ENCODE measurements at regions of chr7 and their contacts with region 1.

Region 1: GRCh38 chr7:74026903-74027551 is 946 bp upstream of the ELN start:
- DNase-seq: peak; percentile 96
- H3K4me3 ChIP-seq: peak overlapping the region; percentile 64 to 82 (median 70)
- H3K27ac ChIP-seq: peak overlapping the region; percentile 82 to 92 (median 92)
- H3K4me1 ChIP-seq: peaks cover 58 to 100% (median 97%) of the 10 kb centered on the region in 4 donors
- H3K27me3 ChIP-seq: no peaks in the 10 kb centered on the region
- CTCF ChIP-seq: peak; percentile 96 to 97 (median 97)
- EP300 ChIP-seq: no peak
- POLR2A ChIP-seq: no peak

Region 2: DNA sequence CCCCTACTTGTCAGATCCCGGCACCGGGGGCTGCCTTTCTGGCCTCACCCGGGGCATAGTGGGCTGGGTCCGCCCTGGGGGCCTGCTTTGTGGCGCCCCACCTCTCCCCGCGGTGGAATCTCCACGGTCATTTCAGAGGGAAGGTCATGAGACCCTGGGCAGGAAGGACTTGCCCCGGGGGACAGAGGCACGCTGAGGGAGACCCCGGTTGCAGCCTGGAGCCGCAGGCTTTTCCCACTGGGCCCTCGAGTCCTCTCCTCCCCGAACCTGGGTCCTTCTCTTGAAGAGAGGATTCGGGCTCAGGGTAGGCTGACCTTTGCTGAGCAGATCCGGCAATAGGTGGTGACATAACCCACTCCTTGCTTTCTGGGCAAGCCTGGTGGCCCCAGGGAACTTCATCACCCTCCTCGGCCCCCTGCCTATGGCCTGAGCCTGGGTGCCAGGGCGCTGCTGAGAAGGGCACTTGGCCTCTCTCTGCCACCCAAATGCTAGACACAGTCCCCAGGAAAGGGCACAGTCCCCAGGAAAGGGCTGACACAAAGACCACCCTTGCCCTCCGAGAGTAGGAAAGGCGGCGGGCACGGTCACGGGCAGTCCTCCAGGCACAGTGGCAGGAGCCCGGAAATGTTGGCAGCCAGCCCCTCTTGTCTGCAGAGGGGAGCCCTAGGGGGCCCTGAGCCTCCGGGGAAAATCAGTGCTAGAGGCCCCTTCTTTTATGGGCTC is 662.9 kb before region 1 on chr7:
- intact Hi-C with region 1: no loop called
- DNase-seq: no peak
- H3K4me3 ChIP-seq: no peak overlapping the region
- H3K27ac ChIP-seq: no peak overlapping the region
- H3K4me1 ChIP-seq: no peaks in the 10 kb centered on the region
- H3K27me3 ChIP-seq: peaks cover 0 to 15% (median 0%) of the 10 kb centered on the region in 4 donors
- CTCF ChIP-seq: no peak
- EP300 ChIP-seq: no peak
- POLR2A ChIP-seq: no peak

Region 3: GRCh38 chr7:73865738-73866445 is 161.1 kb before region 1 on chr7:
- intact Hi-C with region 1: loop called (anchors 2 kb)
- DNase-seq: no peak
- H3K4me3 ChIP-seq: no peak overlapping the region
- H3K27ac ChIP-seq: no peak overlapping the region
- H3K4me1 ChIP-seq: peaks cover 17 to 30% (median 25%) of the 10 kb centered on the region in 4 donors
- H3K27me3 ChIP-seq: no peaks in the 10 kb centered on the region
- CTCF ChIP-seq: peak; percentile 64 to 79 (median 77)
- EP300 ChIP-seq: no peak
- POLR2A ChIP-seq: no peak

Region 4: GRCh38 chr7:73894733-73895551 is 132.1 kb before region 1 on chr7:
- intact Hi-C with region 1: loop called (anchors 5 kb)
- DNase-seq: peak; percentile 95
- H3K4me3 ChIP-seq: no peak overlapping the region
- H3K27ac ChIP-seq: peak overlapping the region; percentile 51 to 81 (median 71)
- H3K4me1 ChIP-seq: peaks cover 11 to 59% (median 55%) of the 10 kb centered on the region in 4 donors
- H3K27me3 ChIP-seq: no peaks in the 10 kb centered on the region
- CTCF ChIP-seq: peak in 1 of 3 experiments; percentile 4
- EP300 ChIP-seq: no peak
- POLR2A ChIP-seq: no peak

Region 5: DNA sequence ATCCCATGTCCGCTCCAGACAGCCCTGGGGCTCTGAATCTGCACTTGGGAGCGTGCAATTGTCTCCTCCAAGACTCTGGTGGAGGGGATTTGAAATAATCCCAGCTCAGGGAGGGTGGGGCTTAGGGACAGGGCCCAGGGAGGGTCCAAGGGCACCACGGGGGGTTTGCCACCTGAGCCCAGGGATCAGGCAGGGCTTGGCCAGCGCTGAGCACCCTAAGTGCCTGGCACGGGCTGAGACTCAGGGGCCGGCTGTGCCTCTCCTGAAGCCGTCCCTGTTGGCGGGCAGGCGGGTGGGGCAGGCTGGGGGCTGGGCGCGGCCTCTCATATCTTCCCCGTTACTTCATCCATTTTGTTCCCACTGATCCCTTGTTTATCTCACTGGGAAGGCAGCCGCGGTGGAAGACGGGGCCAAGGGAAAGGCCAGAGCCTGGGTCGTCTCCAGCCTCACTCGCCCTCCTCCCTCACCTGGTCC is 40.8 kb before region 1 on chr7:
- intact Hi-C with region 1: loop called (anchors 5 kb)
- DNase-seq: no peak
- H3K4me3 ChIP-seq: peak overlapping the region in 2 of 4 donors; percentile 16 to 26
- H3K27ac ChIP-seq: peak overlapping the region; percentile 76 to 86 (median 82)
- H3K4me1 ChIP-seq: peaks cover 24 to 50% (median 49%) of the 10 kb centered on the region in 4 donors
- H3K27me3 ChIP-seq: no peaks in the 10 kb centered on the region
- CTCF ChIP-seq: no peak
- EP300 ChIP-seq: no peak
- POLR2A ChIP-seq: no peak